AG04450 (cell line): ENCODE measurements at regions of chr11 and their contacts with region 1.

Region 1: DNA sequence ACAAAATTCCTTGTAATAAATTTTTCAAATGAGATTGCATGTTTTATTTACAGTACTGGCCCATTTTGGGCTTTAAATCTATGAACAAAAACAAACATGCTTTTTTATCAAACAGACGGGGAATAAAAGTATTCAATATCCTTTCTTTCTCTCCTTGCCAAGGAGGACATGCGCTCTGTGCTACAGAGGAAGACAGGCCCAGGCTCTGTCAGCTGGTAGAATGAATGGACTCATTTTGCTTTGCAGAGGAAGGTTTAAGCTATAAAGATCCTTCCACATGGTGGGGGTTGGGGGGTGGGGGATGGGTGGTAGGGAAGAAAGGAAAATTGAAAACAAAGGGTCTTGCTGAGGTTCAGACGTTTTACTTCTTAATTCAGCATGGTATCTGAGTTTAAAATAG is 575.6 kb downstream of the INSC start:
- DNase-seq: no peak
- H3K4me3 ChIP-seq: no peak overlapping the region
- H3K27ac ChIP-seq: no peak overlapping the region
- H3K27me3 ChIP-seq: peaks cover 2% of the 10 kb centered on the region
- CTCF ChIP-seq: no peak

Region 2: DNA sequence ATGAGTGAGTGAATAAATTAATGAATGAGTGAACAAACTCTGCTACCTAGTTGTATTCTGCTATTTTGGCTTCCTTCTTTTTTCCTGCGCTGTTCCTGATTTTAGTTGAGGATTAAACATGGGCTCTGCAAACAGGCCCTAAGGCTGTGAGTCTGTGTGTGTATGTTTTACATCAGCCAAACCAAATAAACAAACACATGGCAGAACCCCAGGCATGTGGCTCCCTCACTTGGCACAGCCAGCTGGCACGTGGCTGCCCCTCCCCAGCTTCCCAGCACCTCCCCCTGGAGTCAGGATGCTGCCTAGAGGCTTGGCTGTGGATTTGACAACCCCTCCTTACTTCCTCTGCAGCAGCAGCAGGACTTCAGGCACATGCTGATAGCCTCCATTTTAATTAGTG is 17.7 kb after region 1 on chr11:
- CTCF ChIA-PET with region 1: no interaction called
- POLR2A ChIA-PET with region 1: no interaction called
- DNase-seq: no peak
- H3K4me3 ChIP-seq: no peak overlapping the region
- H3K27ac ChIP-seq: no peak overlapping the region
- H3K27me3 ChIP-seq: no peaks in the 10 kb centered on the region
- CTCF ChIP-seq: no peak; the same call in 1 of the 2 replicates

Region 3: DNA sequence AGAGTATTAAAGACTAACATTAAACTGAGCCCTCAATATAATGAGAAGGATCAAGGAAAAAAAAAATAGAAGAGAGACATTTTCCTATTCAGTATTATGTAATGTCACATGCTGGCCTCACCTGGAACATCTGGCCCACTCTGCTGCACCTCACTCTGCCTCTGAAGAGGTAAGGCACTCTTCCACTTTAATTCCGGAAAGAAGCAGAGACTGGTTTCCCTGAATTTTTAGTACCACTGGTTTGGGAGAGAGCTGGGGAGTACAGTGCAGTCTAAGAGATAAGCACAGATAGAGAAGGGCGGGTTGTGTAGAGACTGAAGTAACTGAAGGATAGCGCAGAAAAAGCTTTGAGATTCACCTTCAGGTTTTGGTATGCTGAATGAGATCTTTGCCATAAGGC is 487.4 kb after region 1 on chr11:
- CTCF ChIA-PET with region 1: interaction called, 10 read pairs
- POLR2A ChIA-PET with region 1: no interaction called
- DNase-seq: no peak
- H3K4me3 ChIP-seq: no peak overlapping the region
- H3K27ac ChIP-seq: no peak overlapping the region
- H3K27me3 ChIP-seq: no peaks in the 10 kb centered on the region
- CTCF ChIP-seq: no peak